ENCODE measurements at regions of chr10 and their contacts with region 1.

Region 1: GRCh38 chr10:96395931-96396877 is 37.4 kb upstream of the OPALIN start:
- DNase-seq: peak; percentile 16 to 78 (median 53)
- ATAC-seq: peak; percentile 88
- H3K4me3 ChIP-seq: no peak overlapping the region
- H3K4me3 Mint-ChIP-seq: peak overlapping the region; percentile 57
- H3K27ac ChIP-seq: no peak overlapping the region
- H3K27ac Mint-ChIP-seq: no peak overlapping the region
- H3K4me1 ChIP-seq: no peaks in the 10 kb centered on the region
- H3K4me1 Mint-ChIP-seq: no peaks in the 10 kb centered on the region
- H3K27me3 ChIP-seq: peaks cover 0 to 3% of the 10 kb centered on the region in 2 experiments
- H3K27me3 Mint-ChIP-seq: peaks cover 12% of the 10 kb centered on the region
- CTCF ChIP-seq: peak; percentile 79

Region 2: DNA sequence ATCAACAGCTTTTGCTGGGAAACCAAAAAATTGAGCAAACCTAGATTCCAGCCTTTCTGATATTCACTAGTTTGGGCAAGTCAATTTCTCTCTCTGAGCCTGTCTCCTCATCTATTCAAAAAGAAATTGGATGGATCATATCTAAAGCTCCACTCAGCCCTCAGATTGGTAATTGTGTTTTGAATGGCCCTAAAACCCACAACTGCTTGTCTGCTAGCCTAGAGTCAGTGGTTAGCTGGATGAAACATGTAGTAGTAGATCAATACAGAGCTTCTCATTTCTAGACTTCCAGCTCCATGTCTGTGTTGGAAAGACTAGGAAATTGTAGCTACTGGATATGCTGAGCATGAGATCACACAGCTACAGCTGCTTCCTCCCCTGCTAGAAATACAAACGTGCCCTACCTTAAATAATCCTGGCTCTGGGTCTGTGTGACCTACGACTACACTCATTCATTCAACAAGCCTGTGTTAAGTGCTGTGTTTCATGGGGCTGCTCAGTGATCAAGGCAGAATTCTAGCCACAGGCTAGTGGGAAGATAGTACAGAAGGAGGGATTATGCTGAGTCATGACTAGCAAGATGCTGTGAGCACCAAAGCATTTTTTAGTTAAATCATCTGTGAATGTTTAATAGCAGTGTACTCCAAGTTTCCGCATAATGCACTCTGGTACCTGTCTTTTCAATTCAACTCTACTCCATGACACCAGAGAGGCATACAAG is 76.3 kb before region 1 on chr10:
- CTCF ChIA-PET with region 1: no interaction called
- POLR2A ChIA-PET with region 1: no interaction called
- intact Hi-C with region 1: no loop called
- DNase-seq: no peak
- ATAC-seq: no peak
- H3K4me3 ChIP-seq: no peak overlapping the region
- H3K4me3 Mint-ChIP-seq: no peak overlapping the region
- H3K27ac ChIP-seq: no peak overlapping the region
- H3K27ac Mint-ChIP-seq: no peak overlapping the region
- H3K4me1 ChIP-seq: no peaks in the 10 kb centered on the region
- H3K4me1 Mint-ChIP-seq: no peaks in the 10 kb centered on the region
- H3K27me3 ChIP-seq: no peaks in the 10 kb centered on the region
- H3K27me3 Mint-ChIP-seq: peaks cover 13% of the 10 kb centered on the region
- CTCF ChIP-seq: no peak

Region 3: GRCh38 chr10:96374985-96375830 is 21.0 kb before region 1 on chr10:
- CTCF ChIA-PET with region 1: interaction called, 38 read pairs
- POLR2A ChIA-PET with region 1: no interaction called
- intact Hi-C with region 1: no loop called
- DNase-seq: peak; percentile 30 to 79 (median 68)
- ATAC-seq: peak; percentile 88
- H3K4me3 ChIP-seq: peak overlapping the region; percentile 56 to 71
- H3K4me3 Mint-ChIP-seq: peak overlapping the region; percentile 80
- H3K27ac ChIP-seq: no peak overlapping the region
- H3K27ac Mint-ChIP-seq: no peak overlapping the region
- H3K4me1 ChIP-seq: no peaks in the 10 kb centered on the region
- H3K4me1 Mint-ChIP-seq: peaks cover 11% of the 10 kb centered on the region
- H3K27me3 ChIP-seq: no peaks in the 10 kb centered on the region
- H3K27me3 Mint-ChIP-seq: peaks cover 3% of the 10 kb centered on the region
- CTCF ChIP-seq: peak; percentile 90

Region 4: GRCh38 chr10:96513698-96514561 is 117.7 kb after region 1 on chr10 and contains the start of gene TLL2:
- CTCF ChIA-PET with region 1: interaction called, 4 read pairs
- POLR2A ChIA-PET with region 1: no interaction called
- intact Hi-C with region 1: loop called in 1 of 2 experiments (anchors 2 kb)
- DNase-seq: peak in 8 of 9 experiments; percentile 20 to 71 (median 44)
- ATAC-seq: peak; percentile 59
- H3K4me3 ChIP-seq: peak within 1 kb of the TSS; percentile 45 to 53
- H3K4me3 Mint-ChIP-seq: peak within 1 kb of the TSS; percentile 81
- H3K27ac ChIP-seq: no peak within 1 kb of the TSS
- H3K27ac Mint-ChIP-seq: no peak within 1 kb of the TSS
- H3K4me1 ChIP-seq: peaks cover 6% of the 10 kb centered on the region
- H3K4me1 Mint-ChIP-seq: peaks cover 16% of the 10 kb centered on the region
- H3K27me3 ChIP-seq: peaks cover 8 to 12% of the 10 kb centered on the region in 2 experiments
- H3K27me3 Mint-ChIP-seq: peaks cover 31% of the 10 kb centered on the region
- CTCF ChIP-seq: no peak
- total RNA-seq, gene TLL2: not detected

Region 5: GRCh38 chr10:96556003-96556402 is 159.8 kb after region 1 on chr10:
- CTCF ChIA-PET with region 1: no interaction called
- POLR2A ChIA-PET with region 1: no interaction called
- intact Hi-C with region 1: loop called in 1 of 2 experiments (anchors 5 kb)
- DNase-seq: peak in 2 of 9 experiments; percentile 9 to 20
- ATAC-seq: no peak
- H3K4me3 ChIP-seq: no peak overlapping the region
- H3K4me3 Mint-ChIP-seq: no peak overlapping the region
- H3K27ac ChIP-seq: no peak overlapping the region
- H3K27ac Mint-ChIP-seq: no peak overlapping the region
- H3K4me1 ChIP-seq: no peaks in the 10 kb centered on the region
- H3K4me1 Mint-ChIP-seq: no peaks in the 10 kb centered on the region
- H3K27me3 ChIP-seq: no peaks in the 10 kb centered on the region
- H3K27me3 Mint-ChIP-seq: no peaks in the 10 kb centered on the region
- CTCF ChIP-seq: no peak

Region 6: GRCh38 chr10:96743988-96744585 is 347.9 kb after region 1 on chr10:
- CTCF ChIA-PET with region 1: no interaction called
- POLR2A ChIA-PET with region 1: no interaction called
- intact Hi-C with region 1: loop called in 1 of 2 experiments (anchors 10 kb)
- DNase-seq: peak in 2 of 9 experiments; percentile 34 to 54
- ATAC-seq: no peak
- H3K4me3 ChIP-seq: no peak overlapping the region
- H3K4me3 Mint-ChIP-seq: no peak overlapping the region
- H3K27ac ChIP-seq: no peak overlapping the region
- H3K27ac Mint-ChIP-seq: no peak overlapping the region
- H3K4me1 ChIP-seq: no peaks in the 10 kb centered on the region
- H3K4me1 Mint-ChIP-seq: peaks cover 7% of the 10 kb centered on the region
- H3K27me3 ChIP-seq: no peaks in the 10 kb centered on the region
- H3K27me3 Mint-ChIP-seq: no peaks in the 10 kb centered on the region
- CTCF ChIP-seq: no peak

Region 7: GRCh38 chr10:97025613-97026242 is 629.5 kb after region 1 on chr10:
- CTCF ChIA-PET with region 1: interaction called, 7 read pairs
- POLR2A ChIA-PET with region 1: no interaction called
- intact Hi-C with region 1: loop called (anchors 1 kb)
- DNase-seq: peak in 8 of 9 experiments; percentile 23 to 69 (median 51)
- ATAC-seq: no peak
- H3K4me3 ChIP-seq: no peak overlapping the region
- H3K4me3 Mint-ChIP-seq: no peak overlapping the region
- H3K27ac ChIP-seq: no peak overlapping the region
- H3K27ac Mint-ChIP-seq: no peak overlapping the region
- H3K4me1 ChIP-seq: no peaks in the 10 kb centered on the region
- H3K4me1 Mint-ChIP-seq: no peaks in the 10 kb centered on the region
- H3K27me3 ChIP-seq: no peaks in the 10 kb centered on the region
- H3K27me3 Mint-ChIP-seq: no peaks in the 10 kb centered on the region
- CTCF ChIP-seq: peak; percentile 67